Vagina (tissue), 2 donors: ENCODE measurements at regions of chr18 and their contacts with region 1.

Region 1: DNA sequence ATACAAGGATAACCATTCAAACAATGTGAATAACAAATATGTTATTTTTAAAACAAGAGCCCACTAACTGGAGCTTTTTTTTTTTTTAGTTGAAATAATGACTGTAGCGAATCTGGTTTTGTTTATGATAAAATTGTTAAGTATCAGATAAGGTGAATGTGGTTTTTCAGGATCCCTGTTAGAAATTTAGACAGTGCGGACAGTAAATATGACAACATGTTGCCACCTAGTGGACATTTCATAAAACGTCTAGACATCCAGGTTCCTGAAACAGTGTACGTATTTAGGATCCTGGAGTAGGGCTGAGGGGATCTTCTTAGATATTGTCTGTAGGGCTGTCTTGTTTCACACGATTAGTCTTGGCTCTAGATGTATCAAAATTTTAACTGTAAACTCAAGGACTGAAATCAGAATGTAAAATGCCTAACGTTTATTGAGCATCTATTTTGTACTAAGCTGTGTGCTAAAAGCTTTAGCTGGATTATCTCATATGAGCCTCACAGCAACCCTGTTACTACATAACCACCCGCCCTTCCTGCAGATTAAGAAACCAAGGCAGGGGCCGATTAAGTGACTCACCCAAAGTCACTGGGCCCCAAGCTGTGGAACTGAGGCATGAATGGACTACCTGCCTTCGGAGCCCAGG is 23.9 kb upstream of the CCDC68 start:
- DNase-seq: no peak
- H3K4me3 ChIP-seq: no peak overlapping the region
- H3K27ac ChIP-seq: no peak overlapping the region
- H3K4me1 ChIP-seq: no peaks in the 10 kb centered on the region
- H3K27me3 ChIP-seq: no peaks in the 10 kb centered on the region
- CTCF ChIP-seq: peak; percentile 26 to 75 (median 66)
- POLR2A ChIP-seq: no peak

Region 2: DNA sequence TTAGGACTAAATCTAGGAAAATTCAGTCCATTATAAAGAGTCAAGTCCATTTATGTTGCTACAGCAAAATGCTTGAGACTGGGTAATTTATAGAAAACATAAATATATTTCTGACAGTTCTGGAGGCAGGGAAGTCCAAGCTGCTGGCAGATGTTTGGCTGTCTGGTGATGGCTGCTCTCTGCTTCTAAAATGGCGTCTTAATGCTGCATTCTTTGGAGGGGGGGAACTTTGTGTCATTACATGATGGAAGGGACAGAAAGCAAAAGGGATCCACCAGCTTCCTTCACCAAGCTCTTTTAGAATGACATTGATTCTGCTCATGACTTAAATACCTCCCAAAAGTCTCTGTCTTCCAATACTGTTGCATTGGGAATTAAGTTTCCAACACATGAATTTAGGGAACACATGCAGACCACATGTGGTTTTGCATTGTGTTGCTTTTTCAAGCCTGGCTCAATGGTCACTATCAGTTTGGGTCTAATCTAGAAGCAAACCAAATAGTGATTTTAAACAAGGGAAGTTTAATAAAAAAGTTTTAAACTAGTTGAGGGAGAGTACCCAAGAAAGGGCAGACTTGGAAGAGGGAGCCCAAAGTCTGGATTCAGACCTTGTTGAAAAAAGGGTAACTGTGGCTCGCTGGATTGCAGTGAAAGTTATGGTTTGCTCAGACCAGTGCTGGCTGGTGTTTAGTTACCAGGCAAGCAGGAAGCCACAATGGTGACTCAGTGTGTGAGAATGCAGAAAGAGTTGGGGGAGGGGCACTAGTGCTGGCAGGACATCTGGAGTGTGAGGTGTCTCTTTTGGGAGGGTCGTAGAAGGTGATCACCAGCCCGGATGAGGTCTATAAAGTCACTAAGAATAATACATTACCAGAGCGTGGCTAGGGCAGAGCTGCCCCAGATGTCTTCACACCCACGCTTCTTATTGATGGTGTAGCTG is 594.7 kb before region 1 on chr18:
- intact Hi-C with region 1: loop called (anchors 5 kb)
- DNase-seq: no peak
- H3K4me3 ChIP-seq: no peak overlapping the region
- H3K27ac ChIP-seq: no peak overlapping the region
- H3K4me1 ChIP-seq: no peaks in the 10 kb centered on the region
- H3K27me3 ChIP-seq: no peaks in the 10 kb centered on the region
- CTCF ChIP-seq: no peak
- POLR2A ChIP-seq: no peak

Region 3: DNA sequence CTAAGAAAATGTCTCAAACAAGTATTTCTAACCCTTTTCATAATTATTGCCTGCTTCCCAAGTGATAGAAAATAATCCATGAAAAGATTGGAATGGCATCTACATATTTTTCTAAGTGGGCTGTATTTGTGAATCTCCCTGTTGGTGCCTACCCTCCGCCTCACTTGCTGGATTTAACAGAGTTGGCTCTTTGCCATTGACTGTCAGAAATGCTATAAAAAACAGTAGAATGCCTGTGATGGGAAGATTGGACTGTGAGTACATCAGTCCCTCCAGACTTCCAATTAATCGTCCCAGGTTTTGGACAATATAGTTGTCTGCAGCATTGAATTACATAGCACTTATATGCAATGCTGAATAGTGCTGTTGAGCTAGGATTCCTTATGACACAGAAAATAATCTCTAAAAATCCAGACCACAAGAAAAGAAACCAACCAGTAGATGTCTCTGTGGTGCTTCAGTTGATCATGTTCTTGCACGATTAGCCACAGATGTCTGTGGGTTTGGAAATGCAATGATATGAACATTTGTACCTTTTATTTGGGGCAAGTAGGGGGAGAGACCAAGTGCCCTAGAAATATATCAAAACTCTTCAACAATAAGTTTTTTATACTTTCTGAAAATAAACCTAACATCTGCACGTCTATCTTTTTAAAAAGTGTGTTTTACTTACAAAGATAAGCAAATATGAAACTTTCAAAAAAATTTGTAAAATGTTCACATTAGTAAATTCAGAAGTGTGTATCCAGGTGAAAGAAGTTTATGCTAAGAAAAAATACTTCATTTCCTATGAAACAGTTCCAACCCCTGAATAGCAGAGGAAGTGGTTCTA is 303.6 kb before region 1 on chr18:
- intact Hi-C with region 1: loop called (anchors 5 kb)
- DNase-seq: no peak
- H3K4me3 ChIP-seq: no peak overlapping the region
- H3K27ac ChIP-seq: no peak overlapping the region
- H3K4me1 ChIP-seq: no peaks in the 10 kb centered on the region
- H3K27me3 ChIP-seq: no peaks in the 10 kb centered on the region
- CTCF ChIP-seq: peak in 2 of 3 experiments; percentile 25 to 46
- POLR2A ChIP-seq: no peak